ENCODE measurements at regions of chr5 and their contacts with region 1.

Region 1: GRCh38 chr5:142769741-142770631 is at the start of gene ARHGAP26:
- DNase-seq: peak; percentile 96
- ATAC-seq: peak; percentile 96
- H3K4me3 Mint-ChIP-seq: peak within 1 kb of the TSS; percentile 96
- H3K27ac Mint-ChIP-seq: peak within 1 kb of the TSS; percentile 82
- H3K4me1 Mint-ChIP-seq: peaks cover 35% of the 10 kb centered on the region
- H3K27me3 Mint-ChIP-seq: peaks cover 3% of the 10 kb centered on the region
- total RNA-seq, gene ARHGAP26: 25.4 to 30.3 TPM

Region 2: DNA sequence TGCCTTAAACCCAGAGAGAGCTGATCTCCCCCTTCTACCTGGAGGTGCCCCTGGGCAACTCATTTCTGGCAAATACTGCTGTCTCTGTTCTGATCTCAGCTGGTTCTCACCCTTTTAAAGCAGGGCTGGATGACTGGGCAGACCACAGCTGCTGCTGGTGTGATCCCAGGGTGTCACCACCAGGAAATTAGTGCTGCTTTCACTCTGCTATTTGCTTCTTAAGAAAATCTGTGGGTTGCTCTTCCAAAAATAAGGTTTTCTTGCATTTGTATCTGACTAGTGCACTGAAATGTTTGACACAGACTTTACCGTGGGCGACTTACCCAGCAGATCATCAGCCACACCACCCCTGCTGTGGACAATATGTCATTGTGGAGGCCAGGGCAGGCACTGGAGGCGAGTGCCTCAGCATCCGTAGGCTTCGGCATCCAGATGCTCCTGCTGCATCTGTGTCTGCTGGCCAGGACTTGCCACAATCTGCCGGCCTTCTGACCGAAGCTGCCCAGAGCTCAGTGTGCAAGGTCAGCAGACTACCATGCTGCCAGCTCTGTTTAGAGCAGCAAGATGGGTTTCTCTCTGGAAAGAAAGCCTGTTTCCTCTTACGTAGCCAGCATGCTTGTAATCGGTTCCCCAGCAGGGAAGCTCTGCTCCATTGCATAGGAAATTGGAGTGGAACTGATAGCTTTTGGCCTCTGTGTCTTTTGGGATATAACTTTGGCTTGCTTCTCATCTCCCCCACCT is 13.8 kb after region 1 on chr5:
- CTCF ChIA-PET with region 1: interaction called, 73 read pairs
- POLR2A ChIA-PET with region 1: interaction called, 28 read pairs
- DNase-seq: peak; percentile 67
- ATAC-seq: peak; percentile 81
- H3K4me3 Mint-ChIP-seq: peak overlapping the region; percentile 21
- H3K27ac Mint-ChIP-seq: peak overlapping the region; percentile 56
- H3K4me1 Mint-ChIP-seq: peaks cover 64% of the 10 kb centered on the region
- H3K27me3 Mint-ChIP-seq: no peaks in the 10 kb centered on the region

Region 3: DNA sequence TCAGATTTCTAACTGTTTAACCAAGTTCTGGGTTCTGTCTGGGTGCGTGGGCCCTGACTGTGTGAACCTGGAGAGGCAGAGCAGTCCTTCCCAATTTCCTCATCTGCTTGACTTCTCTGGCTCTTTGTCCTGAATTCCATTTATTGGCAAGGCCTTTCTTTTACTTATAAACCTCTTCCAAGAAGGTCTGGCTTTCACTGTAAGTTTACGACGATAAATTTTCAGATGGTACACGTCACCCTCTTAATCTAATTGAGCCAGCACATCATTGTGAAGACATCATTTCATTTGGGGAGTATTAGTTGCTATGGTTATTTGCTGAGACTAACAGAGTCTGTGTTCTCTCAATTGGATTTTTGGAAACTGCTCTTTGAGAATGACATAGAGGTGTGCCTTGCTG is 92.6 kb after region 1 on chr5:
- CTCF ChIA-PET with region 1: interaction called, 39 read pairs
- POLR2A ChIA-PET with region 1: interaction called, 5 read pairs
- DNase-seq: no peak
- ATAC-seq: no peak
- H3K4me3 Mint-ChIP-seq: no peak overlapping the region
- H3K27ac Mint-ChIP-seq: no peak overlapping the region
- H3K4me1 Mint-ChIP-seq: peaks cover 35% of the 10 kb centered on the region
- H3K27me3 Mint-ChIP-seq: no peaks in the 10 kb centered on the region

Measured in activated CD8-positive, alpha-beta T cell treated with anti-CD3 and anti-CD28 coated beads, Interleukin-2, amount 10 ng/mL, durations not matched to agents 7 days and 5 days (primary cell).